Natural killer cell (primary cell): ENCODE measurements at regions of chr15 and their contacts with region 1.

Region 1: GRCh38 chr15:70299931-70300869 is 202.5 kb upstream of the TLE3 start:
- DNase-seq: peak; percentile 80 to 87
- ATAC-seq: peak; percentile 91 to 96 (median 94)
- H3K4me3 ChIP-seq: no peak overlapping the region
- H3K4me3 Mint-ChIP-seq: peak overlapping the region; percentile 55
- H3K27ac ChIP-seq: no peak overlapping the region
- H3K27ac Mint-ChIP-seq: peak overlapping the region; percentile 60 to 67
- H3K4me1 ChIP-seq: peaks cover 24% of the 10 kb centered on the region
- H3K4me1 Mint-ChIP-seq: peaks cover 9 to 11% of the 10 kb centered on the region in 2 donors
- H3K27me3 ChIP-seq: peaks cover 66% of the 10 kb centered on the region
- H3K27me3 Mint-ChIP-seq: peaks cover 32% of the 10 kb centered on the region in 2 donors
- CTCF ChIP-seq: no peak

Region 2: GRCh38 chr15:70152070-70152480 is 148.1 kb before region 1 on chr15:
- intact Hi-C with region 1: loop called (anchors 1 kb)
- DNase-seq: peak in 1 of 2 donors; percentile 28
- ATAC-seq: peak; percentile 76 to 93 (median 82)
- H3K4me3 ChIP-seq: no peak overlapping the region
- H3K4me3 Mint-ChIP-seq: peak overlapping the region; percentile 28
- H3K27ac ChIP-seq: no peak overlapping the region
- H3K27ac Mint-ChIP-seq: peak overlapping the region in 1 of 2 donors; percentile 38
- H3K4me1 ChIP-seq: peaks cover 17% of the 10 kb centered on the region
- H3K4me1 Mint-ChIP-seq: peaks cover 27 to 28% of the 10 kb centered on the region in 2 donors
- H3K27me3 ChIP-seq: peaks cover 3% of the 10 kb centered on the region
- H3K27me3 Mint-ChIP-seq: peaks cover 51 to 96% of the 10 kb centered on the region in 2 donors
- CTCF ChIP-seq: no peak

Region 3: GRCh38 chr15:70245932-70246331 is 54.3 kb before region 1 on chr15:
- intact Hi-C with region 1: no loop called
- DNase-seq: peak in 1 of 2 donors; percentile 16
- ATAC-seq: peak; percentile 26 to 57 (median 49)
- H3K4me3 ChIP-seq: no peak overlapping the region
- H3K4me3 Mint-ChIP-seq: no peak overlapping the region
- H3K27ac ChIP-seq: no peak overlapping the region
- H3K27ac Mint-ChIP-seq: no peak overlapping the region
- H3K4me1 ChIP-seq: peaks cover 44% of the 10 kb centered on the region
- H3K4me1 Mint-ChIP-seq: peaks cover 17 to 35% of the 10 kb centered on the region in 2 donors
- H3K27me3 ChIP-seq: no peaks in the 10 kb centered on the region
- H3K27me3 Mint-ChIP-seq: peaks cover 19 to 42% of the 10 kb centered on the region in 2 donors
- CTCF ChIP-seq: no peak

Region 4: DNA sequence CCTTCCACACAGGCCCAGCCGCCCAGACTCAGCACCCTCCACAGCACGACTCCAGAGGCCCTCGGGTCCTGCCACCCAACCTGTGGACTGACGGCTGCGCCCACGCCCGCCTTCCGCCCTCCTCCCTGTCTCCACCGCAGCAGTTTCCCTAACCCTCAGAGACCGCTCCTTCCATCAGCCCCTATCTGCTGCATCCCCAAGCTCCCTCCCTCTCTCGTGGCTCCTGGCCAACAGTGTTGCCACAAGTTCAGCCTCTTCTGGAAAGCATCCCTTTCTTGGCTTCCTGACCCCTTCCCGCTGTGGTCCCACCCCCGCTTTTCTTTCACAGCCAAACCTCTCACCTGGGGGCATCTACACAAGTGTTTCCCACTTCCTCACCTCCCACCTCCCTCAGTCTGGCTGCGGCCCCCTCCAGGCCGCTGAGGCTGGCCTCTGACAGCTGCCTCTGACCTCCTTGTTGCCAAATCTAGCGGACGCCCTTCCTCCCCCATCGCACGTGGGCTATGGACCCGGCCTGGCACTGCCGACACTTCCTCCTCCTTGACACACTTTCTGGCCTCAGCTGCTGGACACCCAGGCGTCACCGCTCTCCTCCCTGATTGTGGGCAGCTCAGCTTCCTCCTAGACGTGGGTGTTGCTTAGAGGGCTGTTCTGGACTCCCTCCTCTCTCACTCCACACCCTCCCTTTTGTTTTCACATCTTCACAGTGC is 33.6 kb before region 1 on chr15:
- intact Hi-C with region 1: loop called (anchors 5 kb)
- DNase-seq: peak; percentile 37
- ATAC-seq: peak; percentile 82 to 83 (median 82)
- H3K4me3 ChIP-seq: no peak overlapping the region
- H3K4me3 Mint-ChIP-seq: peak overlapping the region; percentile 74
- H3K27ac ChIP-seq: no peak overlapping the region
- H3K27ac Mint-ChIP-seq: peak overlapping the region; percentile 9 to 77
- H3K4me1 ChIP-seq: peaks cover 75% of the 10 kb centered on the region
- H3K4me1 Mint-ChIP-seq: peaks cover 34 to 59% of the 10 kb centered on the region in 2 donors
- H3K27me3 ChIP-seq: peaks cover 17% of the 10 kb centered on the region
- H3K27me3 Mint-ChIP-seq: peaks cover 22 to 34% of the 10 kb centered on the region in 2 donors
- CTCF ChIP-seq: no peak

Region 5: GRCh38 chr15:70376929-70377691 is 76.9 kb after region 1 on chr15:
- intact Hi-C with region 1: no loop called
- DNase-seq: no peak
- ATAC-seq: no peak
- H3K4me3 ChIP-seq: no peak overlapping the region
- H3K4me3 Mint-ChIP-seq: no peak overlapping the region
- H3K27ac ChIP-seq: no peak overlapping the region
- H3K27ac Mint-ChIP-seq: no peak overlapping the region
- H3K4me1 ChIP-seq: no peaks in the 10 kb centered on the region
- H3K4me1 Mint-ChIP-seq: peaks cover 0 to 6% of the 10 kb centered on the region in 2 donors
- H3K27me3 ChIP-seq: no peaks in the 10 kb centered on the region
- H3K27me3 Mint-ChIP-seq: peaks cover 27 to 57% of the 10 kb centered on the region in 2 donors
- CTCF ChIP-seq: no peak